Transverse colon (tissue), 4 donors: ENCODE measurements at regions of chr16 and their contacts with region 1.

Region 1: DNA sequence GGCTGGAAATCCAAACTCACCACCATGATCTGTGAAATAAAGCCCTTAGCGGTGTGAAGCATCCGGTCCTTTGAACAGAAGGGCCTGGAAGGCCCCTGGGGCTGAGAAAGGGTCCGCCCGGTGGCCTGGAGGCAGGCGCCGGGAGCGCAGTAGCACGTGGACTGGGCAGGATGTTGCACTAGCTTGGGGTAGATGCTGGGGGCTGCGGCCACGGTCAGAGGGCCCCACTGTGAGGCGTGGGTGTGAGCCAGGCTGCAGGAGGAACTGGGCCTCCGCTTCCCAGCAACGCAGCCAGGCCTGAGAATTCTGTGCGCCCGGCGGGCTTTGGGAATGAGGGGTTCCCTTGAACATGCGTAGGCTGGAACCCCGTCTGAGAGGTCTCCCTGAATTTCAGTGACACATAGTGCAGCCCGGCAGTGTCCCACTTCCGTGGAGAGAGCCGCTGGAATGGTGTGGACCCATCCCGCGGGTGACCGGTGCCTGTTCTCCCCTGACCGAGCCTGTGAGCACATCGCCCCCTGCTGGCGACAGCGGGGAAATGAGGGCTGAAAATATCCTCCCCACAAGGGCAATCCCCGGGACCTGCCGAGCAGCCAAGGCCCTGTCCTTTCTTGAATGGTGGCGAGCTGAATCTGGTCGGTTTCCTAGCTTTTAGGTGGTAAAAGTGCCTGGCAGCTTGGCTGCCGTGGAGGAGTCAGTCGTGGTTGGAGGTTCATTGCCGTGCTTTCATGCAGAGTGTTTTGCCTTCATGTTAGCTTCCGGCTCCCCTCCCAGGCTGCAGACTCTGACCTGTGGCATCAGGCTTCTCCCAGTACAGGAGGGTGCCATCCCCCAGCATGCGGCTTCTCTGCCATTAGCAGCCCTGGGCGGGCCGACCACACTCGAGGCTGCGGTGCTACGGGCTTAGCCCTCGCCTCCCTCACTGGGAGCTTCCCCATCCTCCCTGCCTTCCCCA is 43.8 kb downstream of the DNAJA2 start:
- DNase-seq: peak; percentile 73
- H3K4me3 ChIP-seq: no peak overlapping the region
- H3K27ac ChIP-seq: no peak overlapping the region
- H3K4me1 ChIP-seq: peaks cover 0 to 8% (median 2%) of the 10 kb centered on the region in 4 donors
- H3K27me3 ChIP-seq: no peaks in the 10 kb centered on the region
- CTCF ChIP-seq: peak; percentile 84 to 90 (median 89)
- EP300 ChIP-seq: no peak
- POLR2A ChIP-seq: no peak

Region 2: GRCh38 chr16:46673320-46674013 is 256.2 kb before region 1 on chr16:
- in situ Hi-C with region 1: loop called in 2 of 4 experiments (anchors 25 kb)
- intact Hi-C with region 1: no loop called
- DNase-seq: peak; percentile 29
- H3K4me3 ChIP-seq: no peak overlapping the region
- H3K27ac ChIP-seq: no peak overlapping the region
- H3K4me1 ChIP-seq: peaks cover 0 to 7% (median 0%) of the 10 kb centered on the region in 4 donors
- H3K27me3 ChIP-seq: no peaks in the 10 kb centered on the region
- CTCF ChIP-seq: peak; percentile 78 to 92 (median 83)
- EP300 ChIP-seq: no peak
- POLR2A ChIP-seq: no peak